Activated CD4-positive, alpha-beta memory T cell treated with anti-CD3 and anti-CD28 coated beads for 36 hours (primary cell): ENCODE measurements at regions of chr3 and their contacts with region 1.

Region 1: GRCh38 chr3:52220380-52221026 is 4.9 kb downstream of the TLR9 start:
- DNase-seq: peak; percentile 94
- H3K4me3 Mint-ChIP-seq: no peak overlapping the region
- H3K27ac Mint-ChIP-seq: peak overlapping the region; percentile 49
- H3K4me1 Mint-ChIP-seq: peaks cover 83% of the 10 kb centered on the region
- H3K27me3 Mint-ChIP-seq: no peaks in the 10 kb centered on the region

Region 2: GRCh38 chr3:52001443-52001974 is 219.0 kb before region 1 on chr3:
- CTCF ChIA-PET with region 1: interaction called, 15 read pairs
- POLR2A ChIA-PET with region 1: no interaction called
- intact Hi-C with region 1: loop called (anchors 5 kb)
- DNase-seq: peak; percentile 90
- H3K4me3 Mint-ChIP-seq: no peak overlapping the region
- H3K27ac Mint-ChIP-seq: no peak overlapping the region
- H3K4me1 Mint-ChIP-seq: peaks cover 14% of the 10 kb centered on the region
- H3K27me3 Mint-ChIP-seq: no peaks in the 10 kb centered on the region

Region 3: GRCh38 chr3:52197842-52198668 is 22.4 kb before region 1 on chr3 and contains the start of gene ALAS1:
- CTCF ChIA-PET with region 1: interaction called, 76 read pairs
- POLR2A ChIA-PET with region 1: no interaction called
- intact Hi-C with region 1: loop called (anchors 1 kb)
- DNase-seq: peak; percentile 97
- H3K4me3 Mint-ChIP-seq: peak within 1 kb of the TSS; percentile 98
- H3K27ac Mint-ChIP-seq: peak within 1 kb of the TSS; percentile 81
- H3K4me1 Mint-ChIP-seq: peaks cover 46% of the 10 kb centered on the region
- H3K27me3 Mint-ChIP-seq: no peaks in the 10 kb centered on the region
- total RNA-seq, gene ALAS1: 64.4 to 64.5 TPM

Region 4: DNA sequence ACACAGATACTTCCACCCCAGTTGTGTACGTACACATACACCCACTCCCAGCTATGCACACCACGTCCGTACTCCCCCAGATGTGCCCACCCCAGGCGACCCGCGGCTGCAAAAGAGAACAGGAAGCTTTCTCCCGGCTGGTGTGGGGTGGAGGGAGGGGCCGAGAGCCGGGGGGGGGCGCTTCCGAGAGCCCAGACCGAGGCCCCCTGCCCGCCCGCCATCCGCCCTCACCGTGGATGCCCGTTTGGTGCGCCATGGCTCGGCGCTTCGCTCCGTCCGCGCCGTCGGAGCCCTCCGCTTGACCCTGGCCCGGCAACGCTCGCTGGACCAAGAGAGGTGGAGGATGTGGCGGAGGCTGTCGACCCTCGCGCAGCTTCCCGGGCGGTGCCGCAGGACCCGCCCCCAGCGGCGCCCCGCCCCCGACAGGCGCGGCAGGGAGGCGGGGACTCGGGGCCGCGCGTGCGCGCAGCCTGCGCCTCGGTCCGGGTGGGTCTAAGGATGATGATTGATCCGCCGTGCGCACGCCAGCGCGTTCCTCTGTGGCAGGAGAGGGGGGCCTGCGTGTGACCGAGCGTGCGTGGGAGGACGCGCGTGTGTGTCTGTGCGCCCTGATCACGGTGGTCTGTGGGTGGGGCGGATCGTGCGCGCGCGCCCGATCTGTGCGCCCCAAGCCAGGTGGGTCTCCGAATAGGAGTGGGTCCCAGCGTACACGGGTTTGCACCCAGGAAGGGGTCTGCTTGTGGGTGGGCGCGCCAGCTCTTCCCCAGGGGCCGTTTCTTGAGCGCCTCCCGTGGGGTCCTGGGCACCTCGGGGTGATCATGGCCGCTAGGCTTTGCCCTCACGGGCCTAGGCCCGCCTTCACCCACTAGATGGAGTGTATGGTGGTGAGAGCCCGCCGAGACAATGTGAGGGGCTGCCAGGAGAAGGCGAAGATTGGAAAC is 18.5 kb after region 1 on chr3 and contains the start of gene TWF2:
- CTCF ChIA-PET with region 1: interaction called, 136 read pairs
- POLR2A ChIA-PET with region 1: interaction called, 4 read pairs
- intact Hi-C with region 1: loop called (anchors 1 kb)
- DNase-seq: peak; percentile 90
- H3K4me3 Mint-ChIP-seq: peak within 1 kb of the TSS; percentile 99
- H3K27ac Mint-ChIP-seq: peak within 1 kb of the TSS; percentile 97
- H3K4me1 Mint-ChIP-seq: peaks cover 70% of the 10 kb centered on the region
- H3K27me3 Mint-ChIP-seq: no peaks in the 10 kb centered on the region
- total RNA-seq, gene TWF2: 114 to 118 TPM

Region 5: GRCh38 chr3:52310861-52311575 is 90.5 kb after region 1 on chr3:
- CTCF ChIA-PET with region 1: no interaction called
- POLR2A ChIA-PET with region 1: no interaction called
- intact Hi-C with region 1: no loop called
- DNase-seq: peak; percentile 74
- H3K4me3 Mint-ChIP-seq: no peak overlapping the region
- H3K27ac Mint-ChIP-seq: peak overlapping the region; percentile 81
- H3K4me1 Mint-ChIP-seq: peaks cover 39% of the 10 kb centered on the region
- H3K27me3 Mint-ChIP-seq: no peaks in the 10 kb centered on the region

Region 6: DNA sequence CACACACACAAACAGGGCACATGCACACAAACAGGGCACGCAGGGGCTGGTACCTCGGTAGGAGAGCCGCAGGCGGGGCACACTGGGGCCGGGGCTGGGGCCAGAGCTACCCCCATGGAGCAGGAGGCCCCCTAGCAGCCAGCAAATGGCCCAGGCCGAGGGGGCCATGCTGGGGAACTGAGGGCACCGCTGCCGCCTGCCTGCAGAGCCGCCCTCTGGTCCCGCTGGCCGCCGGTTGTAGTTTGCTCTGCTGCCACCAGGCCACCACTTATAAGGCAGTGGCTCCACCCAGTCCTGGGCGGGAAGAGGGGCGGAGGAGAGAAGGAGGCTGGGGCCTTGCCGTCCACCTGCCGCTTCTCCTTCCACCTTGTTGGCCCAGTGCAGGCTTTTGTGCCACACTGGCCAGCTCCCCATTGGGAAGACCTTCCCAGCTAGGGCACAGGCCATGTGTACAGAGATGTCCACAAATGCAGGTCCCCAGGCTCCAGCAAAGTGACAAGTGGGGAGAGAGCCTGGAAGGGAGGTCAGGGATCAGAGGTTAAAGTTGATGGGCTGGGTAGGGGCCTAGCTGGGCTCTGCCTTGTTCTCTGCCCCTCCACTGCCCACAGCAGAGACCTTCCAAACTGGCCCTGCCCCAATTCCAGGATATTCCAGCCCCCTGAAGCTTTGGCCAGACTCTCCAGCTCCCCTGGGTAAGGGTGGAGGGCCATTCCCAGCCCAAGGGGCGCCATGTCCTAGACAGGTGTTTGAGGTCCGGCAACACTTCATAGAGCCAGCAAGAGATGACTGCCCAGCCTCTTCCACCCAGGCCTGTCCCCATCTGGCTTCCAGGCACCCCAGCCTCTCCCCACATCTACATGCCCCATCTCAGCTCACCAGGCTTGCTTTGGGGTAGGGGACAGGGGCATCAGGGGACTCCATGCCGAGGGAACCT is 224.6 kb after region 1 on chr3 and contains the start of gene SEMA3G:
- CTCF ChIA-PET with region 1: interaction called, 8 read pairs
- POLR2A ChIA-PET with region 1: no interaction called
- intact Hi-C with region 1: loop called (anchors 5 kb)
- DNase-seq: peak; percentile 87
- H3K4me3 Mint-ChIP-seq: no peak within 1 kb of the TSS
- H3K27ac Mint-ChIP-seq: no peak within 1 kb of the TSS
- H3K4me1 Mint-ChIP-seq: peaks cover 10% of the 10 kb centered on the region
- H3K27me3 Mint-ChIP-seq: no peaks in the 10 kb centered on the region
- total RNA-seq, gene SEMA3G: 0.10 to 0.14 TPM